ENCODE measurements at regions of chr3 and their contacts with region 1.

Region 1: DNA sequence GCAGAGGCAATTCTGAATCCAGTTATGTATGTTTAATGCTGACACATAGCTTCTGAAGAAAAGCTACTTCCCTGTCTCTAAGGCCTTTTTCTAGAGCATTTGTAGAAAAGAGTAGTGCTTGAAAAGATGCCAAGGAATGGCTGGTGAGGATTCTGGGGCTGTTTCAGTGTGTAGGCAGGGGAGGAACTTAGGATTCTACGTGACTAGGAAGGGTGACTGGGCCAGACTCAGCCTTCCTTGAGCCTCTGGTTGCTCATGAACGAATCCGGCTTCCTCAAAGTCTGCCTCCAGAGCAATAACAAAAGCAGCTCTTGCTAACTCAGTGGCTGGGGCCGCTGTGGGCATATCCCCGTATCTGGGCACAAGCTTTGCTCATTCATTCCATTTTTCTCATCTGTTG is 104.8 kb upstream of the WNT5A start:
- H3K4me3 Mint-ChIP-seq: no peak overlapping the region
- H3K27ac Mint-ChIP-seq: peak overlapping the region; percentile 90
- H3K4me1 Mint-ChIP-seq: peaks cover 75% of the 10 kb centered on the region
- H3K27me3 Mint-ChIP-seq: peaks cover 2% of the 10 kb centered on the region

Region 2: DNA sequence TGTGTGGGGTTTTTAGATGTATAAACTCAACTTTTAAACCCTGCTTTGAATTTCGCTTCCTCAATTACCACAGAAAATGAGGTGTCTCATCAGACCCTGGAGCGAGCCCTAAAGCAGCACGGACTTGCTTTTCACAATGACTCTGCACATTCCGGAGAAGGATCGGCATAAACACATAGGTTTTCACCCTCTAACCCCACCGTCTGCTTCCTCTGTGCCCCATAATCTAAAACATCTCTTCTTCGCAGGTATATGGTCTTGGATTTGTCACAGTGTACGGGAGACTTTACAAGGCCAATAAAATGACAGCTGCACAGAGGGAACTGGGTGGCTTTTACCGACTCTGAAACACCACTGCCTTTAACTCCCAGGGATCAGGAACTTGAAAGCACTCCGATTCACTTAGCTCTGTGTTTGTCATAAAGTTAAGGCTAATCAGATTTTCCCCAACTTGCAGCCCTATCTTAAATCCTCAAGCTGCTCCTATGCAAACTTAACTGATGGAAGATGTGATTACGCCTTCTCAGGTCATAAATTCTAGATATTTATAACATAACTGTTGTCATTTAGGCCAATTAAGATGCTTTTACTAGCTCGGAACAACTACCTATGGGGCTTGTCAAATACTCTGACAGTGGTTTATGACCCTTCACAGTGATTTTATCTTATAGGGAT is 28.6 kb after region 1 on chr3:
- intact Hi-C with region 1: loop called (anchors 2 kb)
- H3K4me3 Mint-ChIP-seq: peak overlapping the region; percentile 42
- H3K27ac Mint-ChIP-seq: peak overlapping the region; percentile 88
- H3K4me1 Mint-ChIP-seq: peaks cover 79% of the 10 kb centered on the region
- H3K27me3 Mint-ChIP-seq: no peaks in the 10 kb centered on the region